ENCODE measurements at regions of chr10 and their contacts with region 1.

Region 1: GRCh38 chr10:29946953-29947700 is 112.3 kb downstream of the JCAD start:
- DNase-seq: peak; percentile 73
- H3K4me3 ChIP-seq: no peak overlapping the region
- H3K27ac ChIP-seq: peak overlapping the region; percentile 33
- H3K4me1 ChIP-seq: peaks cover 51% of the 10 kb centered on the region
- H3K27me3 ChIP-seq: no peaks in the 10 kb centered on the region
- CTCF ChIP-seq: no peak
- POLR2A ChIP-seq: no peak

Region 2: DNA sequence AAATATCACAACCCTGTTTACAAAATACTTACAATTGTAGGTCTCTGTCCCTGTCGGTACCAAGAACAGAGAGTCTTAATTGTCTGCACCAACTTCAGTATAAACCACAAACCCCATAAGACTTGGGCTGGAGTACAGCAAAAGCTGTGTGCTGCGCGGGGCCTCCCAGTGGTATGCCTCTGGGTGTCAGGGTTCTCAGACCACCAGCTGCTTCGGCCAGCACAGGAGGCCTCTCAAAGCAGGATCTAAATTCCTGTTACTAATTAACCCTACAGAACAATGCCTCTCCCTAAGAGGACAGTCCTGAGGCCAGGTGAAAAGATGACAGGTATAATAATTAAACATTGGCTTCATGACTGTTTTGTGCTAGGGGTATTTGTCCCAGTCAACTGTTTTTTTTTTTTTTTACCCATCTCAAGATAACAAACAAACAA is 311.4 kb before region 1 on chr10:
- CTCF ChIA-PET with region 1: no interaction called
- POLR2A ChIA-PET with region 1: no interaction called
- dilution Hi-C with region 1: no loop called
- intact Hi-C with region 1: loop called (anchors 1 kb)
- DNase-seq: peak; percentile 57
- H3K4me3 ChIP-seq: no peak overlapping the region
- H3K27ac ChIP-seq: peak overlapping the region; percentile 93
- H3K4me1 ChIP-seq: peaks cover 37% of the 10 kb centered on the region
- H3K27me3 ChIP-seq: no peaks in the 10 kb centered on the region
- CTCF ChIP-seq: no peak
- POLR2A ChIP-seq: no peak

Region 3: GRCh38 chr10:29691564-29692072 is 255.5 kb before region 1 on chr10:
- CTCF ChIA-PET with region 1: interaction called, 3 read pairs
- POLR2A ChIA-PET with region 1: interaction called, 3 read pairs
- dilution Hi-C with region 1: no loop called
- intact Hi-C with region 1: loop called (anchors 1 kb)
- DNase-seq: peak; percentile 97
- H3K4me3 ChIP-seq: peak overlapping the region in 1 of 3 experiments; percentile 57
- H3K27ac ChIP-seq: peak overlapping the region; percentile 100
- H3K4me1 ChIP-seq: peaks cover 49% of the 10 kb centered on the region
- H3K27me3 ChIP-seq: no peaks in the 10 kb centered on the region
- CTCF ChIP-seq: no peak
- POLR2A ChIP-seq: peak; percentile 28

Region 4: DNA sequence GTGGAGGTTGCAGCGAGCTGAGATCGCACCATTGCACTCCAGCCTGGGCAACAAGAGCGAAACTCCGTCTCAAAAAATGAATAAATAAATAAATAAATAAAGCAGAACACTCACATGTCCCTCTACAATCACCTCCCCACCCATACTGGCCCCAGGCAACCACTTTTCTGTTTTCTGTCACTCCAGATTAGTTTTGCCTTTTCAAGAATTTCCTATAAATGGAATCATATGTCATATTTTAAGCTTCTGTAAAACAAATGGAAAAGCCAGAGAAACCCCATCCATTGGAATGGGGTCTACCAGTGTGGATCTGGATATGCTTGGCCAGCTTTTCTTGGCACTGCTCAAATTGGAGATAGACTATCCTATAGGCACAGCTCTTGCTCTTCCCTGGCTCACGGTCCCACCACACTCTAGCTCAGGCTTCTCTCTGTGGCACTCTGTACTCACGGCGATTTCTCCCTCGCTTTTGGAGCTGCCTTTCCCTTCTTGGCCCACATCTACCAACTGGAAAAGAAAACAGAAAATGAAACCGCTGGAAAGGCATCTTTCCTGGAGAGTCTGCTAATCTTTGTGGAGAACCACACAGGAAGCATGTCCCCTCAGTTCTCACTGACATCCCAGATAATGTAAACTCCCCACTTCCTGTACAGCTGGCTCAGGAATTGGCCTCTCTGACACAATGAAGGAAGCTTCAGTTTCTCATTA is 97.8 kb before region 1 on chr10:
- CTCF ChIA-PET with region 1: interaction called, 4 read pairs
- POLR2A ChIA-PET with region 1: no interaction called
- dilution Hi-C with region 1: no loop called
- intact Hi-C with region 1: loop called (anchors 1 kb)
- DNase-seq: peak; percentile 86
- H3K4me3 ChIP-seq: peak overlapping the region in 1 of 3 experiments; percentile 52
- H3K27ac ChIP-seq: peak overlapping the region; percentile 81
- H3K4me1 ChIP-seq: peaks cover 31% of the 10 kb centered on the region
- H3K27me3 ChIP-seq: no peaks in the 10 kb centered on the region
- CTCF ChIP-seq: no peak
- POLR2A ChIP-seq: peak; percentile 64

Region 5: GRCh38 chr10:29895456-29895855 is 51.7 kb before region 1 on chr10:
- CTCF ChIA-PET with region 1: interaction called, 13 read pairs
- POLR2A ChIA-PET with region 1: interaction called, 4 read pairs
- dilution Hi-C with region 1: no loop called
- intact Hi-C with region 1: loop called (anchors 1 kb)
- DNase-seq: peak; percentile 98
- H3K4me3 ChIP-seq: peak overlapping the region in 1 of 3 experiments; percentile 19
- H3K27ac ChIP-seq: peak overlapping the region; percentile 83
- H3K4me1 ChIP-seq: peaks cover 14% of the 10 kb centered on the region
- H3K27me3 ChIP-seq: no peaks in the 10 kb centered on the region
- CTCF ChIP-seq: no peak
- POLR2A ChIP-seq: peak; percentile 35

Region 6: DNA sequence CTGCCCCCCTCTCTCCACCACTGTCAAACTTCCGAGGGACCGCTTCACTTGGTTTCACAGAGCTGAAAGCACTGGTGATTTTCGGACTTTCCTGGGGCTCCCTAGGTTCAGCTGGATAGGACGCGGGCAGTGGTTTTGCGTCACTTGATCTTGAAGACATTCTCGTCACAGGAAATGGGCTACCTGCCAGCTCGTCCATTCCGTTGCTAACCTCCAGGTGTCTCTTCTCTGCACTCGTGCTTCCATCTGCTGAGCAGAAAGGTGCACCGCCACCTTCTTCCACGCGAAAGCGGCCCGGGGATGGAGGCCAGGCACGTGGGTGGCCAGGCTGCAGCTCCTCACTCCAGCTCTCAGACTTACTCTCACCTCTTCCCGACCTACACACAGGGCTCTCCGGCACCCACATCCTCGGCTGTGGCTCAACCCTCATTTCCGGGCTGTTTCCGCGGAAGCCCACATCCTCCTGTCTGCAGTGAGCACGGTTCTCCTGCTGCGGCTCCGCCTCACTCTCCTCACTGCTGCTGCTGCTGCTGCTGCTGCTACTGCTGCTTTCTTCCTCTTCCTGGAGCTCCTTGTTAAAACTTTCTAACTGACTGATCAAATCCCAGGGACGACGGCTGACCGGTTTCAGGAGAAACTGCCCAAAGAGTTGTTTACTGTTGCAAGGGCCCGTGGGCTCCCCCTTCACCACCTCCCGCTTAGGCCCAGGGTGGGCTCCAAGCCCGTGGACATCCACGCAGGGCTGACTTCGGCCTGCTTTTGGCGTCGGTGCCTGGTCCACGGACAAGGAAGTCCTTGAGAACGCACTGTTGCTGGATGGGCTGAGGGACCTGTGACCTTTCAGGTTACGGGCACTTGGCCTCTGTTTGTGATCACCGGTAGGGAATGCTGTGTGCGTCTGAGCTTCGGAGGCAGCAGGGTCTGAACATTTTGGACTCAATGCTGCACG is 80.2 kb after region 1 on chr10:
- CTCF ChIA-PET with region 1: no interaction called
- POLR2A ChIA-PET with region 1: no interaction called
- dilution Hi-C with region 1: no loop called
- intact Hi-C with region 1: loop called (anchors 1 kb)
- DNase-seq: peak; percentile 73
- H3K4me3 ChIP-seq: no peak overlapping the region
- H3K27ac ChIP-seq: peak overlapping the region; percentile 78
- H3K4me1 ChIP-seq: peaks cover 44% of the 10 kb centered on the region
- H3K27me3 ChIP-seq: no peaks in the 10 kb centered on the region
- CTCF ChIP-seq: peak; percentile 14
- POLR2A ChIP-seq: peak; percentile 40

Measured in endothelial cell of umbilical vein (primary cell).